ENCODE measurements at regions of chr10 and their contacts with region 1.

Region 1: GRCh38 chr10:123008439-123009205 is at the starts of genes ACADSB and IKZF5:
- DNase-seq: peak; percentile 97
- H3K4me3 ChIP-seq: peak within 1 kb of the TSS; percentile 92
- H3K27ac ChIP-seq: peak within 1 kb of the TSS; percentile 52
- H3K4me1 ChIP-seq: peaks cover 22% of the 10 kb centered on the region
- CTCF ChIP-seq: no peak
- total RNA-seq, gene ACADSB: 3.7 and 3.8 TPM in 2 replicates
- total RNA-seq, gene IKZF5: 3.7 and 5.1 TPM in 2 replicates

Region 2: DNA sequence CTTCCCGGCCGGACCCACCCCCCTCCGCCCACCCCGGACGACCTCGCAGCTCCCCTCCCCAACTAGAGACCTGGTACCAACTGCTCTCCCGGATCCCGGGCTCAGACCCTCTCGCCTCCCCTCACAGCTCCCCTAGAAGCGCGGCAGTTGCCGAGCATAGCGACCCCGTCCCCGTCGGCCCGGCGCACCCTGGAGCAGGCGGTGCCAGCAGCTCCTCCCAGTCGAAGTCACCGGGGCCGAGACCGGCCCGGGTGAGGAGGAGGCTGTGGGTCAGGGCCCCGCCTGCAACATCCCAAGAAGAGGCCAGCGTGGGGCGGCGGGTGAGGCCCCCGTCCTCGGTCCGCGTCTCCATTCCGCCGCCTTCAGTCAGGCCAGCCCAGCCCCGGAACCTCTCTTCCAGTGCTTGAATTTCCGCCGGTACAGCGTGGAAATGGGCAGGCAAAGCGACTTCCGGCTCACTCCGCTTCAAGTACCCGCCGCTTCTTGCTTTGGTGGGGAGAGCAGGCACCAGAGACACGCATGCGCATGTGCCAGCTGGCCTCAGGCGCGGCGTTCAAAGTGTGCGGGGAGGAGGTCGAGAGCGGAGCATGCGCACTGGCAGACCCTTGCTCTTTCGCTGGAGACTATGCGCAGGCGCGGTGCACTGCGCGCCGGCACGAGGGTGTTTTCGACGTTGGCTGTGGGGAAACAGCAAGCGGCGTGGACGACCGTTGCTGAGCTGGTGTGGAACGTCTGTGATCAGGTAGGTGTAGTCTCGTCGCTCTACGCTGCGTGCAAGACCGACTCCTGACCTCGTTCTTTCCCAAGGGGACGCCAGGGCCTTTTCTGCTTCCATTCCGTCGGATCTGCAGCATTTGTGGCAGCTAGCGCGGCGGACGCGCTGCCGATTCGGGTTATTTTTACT is 54.5 kb before region 1 on chr10 and contains the start of gene C10orf88:
- CTCF ChIA-PET with region 1: no interaction called
- POLR2A ChIA-PET with region 1: interaction called, 3 read pairs
- intact Hi-C with region 1: loop called (anchors 2 kb)
- DNase-seq: peak; percentile 95
- H3K4me3 ChIP-seq: peak within 1 kb of the TSS; percentile 90
- H3K27ac ChIP-seq: peak within 1 kb of the TSS; percentile 48
- H3K4me1 ChIP-seq: peaks cover 11% of the 10 kb centered on the region
- CTCF ChIP-seq: no peak
- total RNA-seq, gene C10orf88: 5.5 and 8.0 TPM in 2 replicates

Region 3: GRCh38 chr10:122980209-122981065 is 28.2 kb before region 1 on chr10 and contains the start of gene PSTK:
- CTCF ChIA-PET with region 1: interaction called, 3 read pairs
- POLR2A ChIA-PET with region 1: interaction called, 11 read pairs
- intact Hi-C with region 1: loop called (anchors 1 kb)
- DNase-seq: peak; percentile 92
- H3K4me3 ChIP-seq: peak within 1 kb of the TSS; percentile 72
- H3K27ac ChIP-seq: peak within 1 kb of the TSS; percentile 73
- H3K4me1 ChIP-seq: peaks cover 16% of the 10 kb centered on the region
- CTCF ChIP-seq: peak; percentile 74
- total RNA-seq, gene PSTK: 4.9 and 7.4 TPM in 2 replicates

Region 4: GRCh38 chr10:123154092-123154921 is 145.7 kb after region 1 on chr10 and contains the start of gene BUB3:
- CTCF ChIA-PET with region 1: no interaction called
- POLR2A ChIA-PET with region 1: interaction called, 3 read pairs
- intact Hi-C with region 1: loop called (anchors 2 kb)
- DNase-seq: peak; percentile 99
- H3K4me3 ChIP-seq: peak within 1 kb of the TSS; percentile 92
- H3K27ac ChIP-seq: peak within 1 kb of the TSS; percentile 83
- H3K4me1 ChIP-seq: peaks cover 54% of the 10 kb centered on the region
- CTCF ChIP-seq: no peak
- total RNA-seq, gene BUB3: 437 and 526 TPM in 2 replicates